CD8-positive, alpha-beta T cell (primary cell): ENCODE measurements at regions of chr1 and their contacts with region 1.

Region 1: DNA sequence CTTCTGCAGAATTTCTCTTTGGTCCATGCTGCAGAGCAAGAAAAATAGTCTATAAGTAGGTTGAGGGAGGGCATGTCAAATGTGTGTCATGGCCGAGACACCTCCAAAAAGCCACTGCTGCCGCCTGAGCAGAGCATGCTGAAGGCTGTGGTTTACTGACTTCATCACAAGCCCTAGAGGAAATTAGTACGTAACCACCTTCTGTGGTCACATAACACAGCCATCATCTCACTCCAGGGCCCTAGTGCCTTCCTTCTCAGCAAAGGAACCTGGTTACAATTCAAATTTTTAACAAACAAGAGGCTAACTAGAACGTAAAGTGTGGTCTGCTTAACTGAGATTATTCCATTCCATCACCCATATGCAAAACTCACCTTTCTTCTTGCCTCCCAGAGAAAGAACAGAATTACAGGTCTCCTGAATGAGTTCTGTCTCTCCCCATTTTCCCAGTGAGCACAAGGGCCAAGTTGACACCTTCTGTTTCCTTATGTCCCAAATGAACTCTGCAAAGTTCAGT is at the start of gene PTPN22:
- DNase-seq: peak; percentile 64 to 96 (median 80)
- ATAC-seq: peak; percentile 84
- H3K4me3 ChIP-seq: peak within 1 kb of the TSS; percentile 53 to 66
- H3K4me3 Mint-ChIP-seq: peak within 1 kb of the TSS; percentile 83
- H3K27ac ChIP-seq: peak within 1 kb of the TSS; percentile 79 to 82
- H3K27ac Mint-ChIP-seq: peak within 1 kb of the TSS; percentile 98
- H3K4me1 ChIP-seq: peaks cover 65% of the 10 kb centered on the region
- H3K4me1 Mint-ChIP-seq: peaks cover 81% of the 10 kb centered on the region
- H3K27me3 ChIP-seq: no peaks in the 10 kb centered on the region
- H3K27me3 Mint-ChIP-seq: no peaks in the 10 kb centered on the region
- CTCF ChIP-seq: no peak
- total RNA-seq, gene PTPN22: 48.6 to 52.4 TPM

Region 2: DNA sequence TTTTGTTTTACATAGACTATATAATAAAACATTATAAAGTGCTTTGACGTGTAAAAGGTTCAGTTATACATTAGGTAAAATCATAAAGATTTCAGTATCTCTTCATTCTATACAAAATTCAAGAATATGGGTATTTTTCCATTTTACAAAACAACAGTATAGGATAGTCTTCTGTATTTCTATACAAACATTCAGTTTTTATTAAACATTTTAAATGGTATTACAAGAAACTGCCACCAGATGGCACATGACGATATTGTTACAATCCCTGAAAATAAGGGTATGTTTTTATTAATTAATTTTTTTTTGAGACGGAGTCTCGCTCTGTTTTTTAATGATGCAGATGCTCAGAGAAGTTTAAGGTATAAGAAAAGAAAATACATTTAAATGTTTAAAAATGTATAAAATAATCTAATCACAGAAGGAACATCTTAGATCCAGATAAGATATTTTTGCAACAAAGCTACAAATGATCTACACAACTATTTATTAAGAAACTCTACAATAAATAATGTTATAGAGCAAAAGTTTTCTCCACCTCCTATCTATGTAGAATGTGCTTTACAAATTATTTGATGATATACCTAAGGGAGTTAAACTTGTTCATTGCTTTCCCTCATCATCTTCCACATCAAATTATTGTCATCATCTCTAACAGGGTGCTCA is 35.9 kb before region 1 on chr1:
- CTCF ChIA-PET with region 1: interaction called, 12 read pairs
- POLR2A ChIA-PET with region 1: interaction called, 5 read pairs
- intact Hi-C with region 1: loop called (anchors 1 to 2 kb)
- DNase-seq: peak in 4 of 9 experiments; percentile 17 to 77 (median 54)
- ATAC-seq: no peak
- H3K4me3 ChIP-seq: no peak overlapping the region
- H3K4me3 Mint-ChIP-seq: no peak overlapping the region
- H3K27ac ChIP-seq: no peak overlapping the region
- H3K27ac Mint-ChIP-seq: no peak overlapping the region
- H3K4me1 ChIP-seq: no peaks in the 10 kb centered on the region
- H3K4me1 Mint-ChIP-seq: peaks cover 7% of the 10 kb centered on the region
- H3K27me3 ChIP-seq: no peaks in the 10 kb centered on the region
- H3K27me3 Mint-ChIP-seq: no peaks in the 10 kb centered on the region
- CTCF ChIP-seq: peak; percentile 86

Region 3: DNA sequence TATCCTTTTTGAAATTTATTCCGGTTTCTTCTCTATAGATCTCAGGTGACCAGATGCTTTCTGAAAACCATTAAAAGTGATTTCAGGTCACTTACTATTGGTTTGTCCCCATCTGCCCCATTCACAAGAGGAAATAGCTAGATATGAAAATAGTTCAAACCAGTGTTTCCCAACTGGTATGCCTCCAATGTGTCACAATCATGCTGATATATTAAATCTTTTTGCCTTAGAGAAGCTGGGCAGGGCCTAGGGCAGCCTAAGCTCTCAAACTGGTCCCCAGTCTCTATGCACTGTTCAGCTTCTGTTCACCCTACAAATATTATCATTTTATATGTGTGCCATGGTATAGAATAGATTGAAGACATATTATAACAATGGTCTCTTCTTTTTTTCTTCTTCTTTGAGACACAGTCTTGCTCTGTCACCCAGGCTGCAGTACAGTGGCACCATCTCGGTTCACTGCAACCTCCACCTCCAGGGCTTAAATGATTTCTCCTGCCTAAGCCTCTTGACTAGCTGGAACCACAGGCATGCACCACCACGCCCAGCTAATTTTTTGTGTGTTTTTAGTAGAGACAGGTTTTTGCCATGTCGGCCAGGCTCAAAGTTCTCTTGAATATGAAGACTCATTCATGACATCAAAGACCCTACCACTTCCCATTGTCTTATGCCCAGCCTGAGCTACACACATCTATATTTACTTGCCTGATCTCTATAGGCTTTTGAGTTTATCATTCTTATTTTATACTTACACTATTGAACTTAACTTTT is 15.8 kb before region 1 on chr1:
- CTCF ChIA-PET with region 1: interaction called, 3 read pairs
- POLR2A ChIA-PET with region 1: interaction called, 9 read pairs
- intact Hi-C with region 1: loop called (anchors 2 kb)
- DNase-seq: no peak
- ATAC-seq: no peak
- H3K4me3 ChIP-seq: no peak overlapping the region
- H3K4me3 Mint-ChIP-seq: no peak overlapping the region
- H3K27ac ChIP-seq: no peak overlapping the region
- H3K27ac Mint-ChIP-seq: peak overlapping the region; percentile 37
- H3K4me1 ChIP-seq: peaks cover 2% of the 10 kb centered on the region
- H3K4me1 Mint-ChIP-seq: peaks cover 26% of the 10 kb centered on the region
- H3K27me3 ChIP-seq: no peaks in the 10 kb centered on the region
- H3K27me3 Mint-ChIP-seq: no peaks in the 10 kb centered on the region
- CTCF ChIP-seq: no peak

Region 4: DNA sequence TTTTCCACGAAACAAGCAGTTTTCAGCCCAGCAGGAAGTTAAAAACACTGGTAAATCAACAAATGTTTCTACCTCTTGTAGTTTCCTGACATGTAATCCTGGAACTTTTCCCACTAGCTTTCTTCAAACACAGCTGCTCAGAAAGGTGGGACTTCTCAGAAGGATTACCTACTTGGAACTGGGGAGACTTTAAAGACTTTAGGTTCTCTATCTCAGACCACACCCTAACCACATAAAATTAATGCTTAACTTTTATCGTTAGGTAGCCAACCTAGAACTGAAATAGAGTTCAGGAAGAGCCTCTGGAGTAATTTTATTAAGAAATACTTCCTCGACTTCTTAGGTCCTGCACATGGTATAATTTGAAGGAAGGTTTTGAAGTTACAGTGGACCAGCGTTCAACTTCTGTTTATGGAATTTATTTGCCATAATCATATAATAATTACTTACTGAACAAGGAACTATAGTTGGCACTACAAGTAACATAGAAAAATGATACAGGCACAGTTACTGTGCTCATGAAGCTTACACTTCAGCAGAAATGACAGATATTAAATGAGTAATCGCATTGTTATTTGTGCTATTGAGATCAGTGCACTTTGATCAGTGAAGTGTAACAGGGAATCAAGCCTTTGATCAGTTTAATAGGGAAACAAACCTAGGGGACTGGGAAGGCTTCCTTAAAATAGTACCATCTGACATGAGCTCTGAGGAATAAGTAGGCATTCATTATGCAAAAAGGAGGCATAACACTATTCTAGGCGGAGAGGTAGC is 15.9 kb after region 1 on chr1 and contains the start of gene BCL2L15:
- CTCF ChIA-PET with region 1: interaction called, 5 read pairs
- POLR2A ChIA-PET with region 1: interaction called, 5 read pairs
- intact Hi-C with region 1: loop called in 1 of 2 experiments (anchors 2 kb)
- DNase-seq: no peak
- ATAC-seq: no peak
- H3K4me3 ChIP-seq: no peak within 1 kb of the TSS
- H3K4me3 Mint-ChIP-seq: no peak within 1 kb of the TSS
- H3K27ac ChIP-seq: no peak within 1 kb of the TSS
- H3K27ac Mint-ChIP-seq: no peak within 1 kb of the TSS
- H3K4me1 ChIP-seq: peaks cover 10% of the 10 kb centered on the region
- H3K4me1 Mint-ChIP-seq: peaks cover 11% of the 10 kb centered on the region
- H3K27me3 ChIP-seq: no peaks in the 10 kb centered on the region
- H3K27me3 Mint-ChIP-seq: no peaks in the 10 kb centered on the region
- CTCF ChIP-seq: no peak
- total RNA-seq, gene BCL2L15: 0.89 to 2.0 TPM